ENCODE measurements at regions of chr5 and their contacts with region 1.

Region 1: GRCh38 chr5:122999945-123000563 is 36.5 kb downstream of the PPIC start:
- DNase-seq: peak; percentile 63 to 80 (median 73)
- ATAC-seq: peak; percentile 95
- H3K4me3 ChIP-seq: no peak overlapping the region
- H3K27ac ChIP-seq: no peak overlapping the region
- H3K4me1 ChIP-seq: no peaks in the 10 kb centered on the region
- H3K27me3 ChIP-seq: peaks cover 0 to 6% of the 10 kb centered on the region in 2 experiments; a peak in 1 of 5 replicates
- CTCF ChIP-seq: peak; percentile 84 to 90 (median 86)
- EP300 ChIP-seq: no peak
- POLR2A ChIP-seq: no peak
- RAD21 ChIP-seq: peak; percentile 93 to 94

Region 2: DNA sequence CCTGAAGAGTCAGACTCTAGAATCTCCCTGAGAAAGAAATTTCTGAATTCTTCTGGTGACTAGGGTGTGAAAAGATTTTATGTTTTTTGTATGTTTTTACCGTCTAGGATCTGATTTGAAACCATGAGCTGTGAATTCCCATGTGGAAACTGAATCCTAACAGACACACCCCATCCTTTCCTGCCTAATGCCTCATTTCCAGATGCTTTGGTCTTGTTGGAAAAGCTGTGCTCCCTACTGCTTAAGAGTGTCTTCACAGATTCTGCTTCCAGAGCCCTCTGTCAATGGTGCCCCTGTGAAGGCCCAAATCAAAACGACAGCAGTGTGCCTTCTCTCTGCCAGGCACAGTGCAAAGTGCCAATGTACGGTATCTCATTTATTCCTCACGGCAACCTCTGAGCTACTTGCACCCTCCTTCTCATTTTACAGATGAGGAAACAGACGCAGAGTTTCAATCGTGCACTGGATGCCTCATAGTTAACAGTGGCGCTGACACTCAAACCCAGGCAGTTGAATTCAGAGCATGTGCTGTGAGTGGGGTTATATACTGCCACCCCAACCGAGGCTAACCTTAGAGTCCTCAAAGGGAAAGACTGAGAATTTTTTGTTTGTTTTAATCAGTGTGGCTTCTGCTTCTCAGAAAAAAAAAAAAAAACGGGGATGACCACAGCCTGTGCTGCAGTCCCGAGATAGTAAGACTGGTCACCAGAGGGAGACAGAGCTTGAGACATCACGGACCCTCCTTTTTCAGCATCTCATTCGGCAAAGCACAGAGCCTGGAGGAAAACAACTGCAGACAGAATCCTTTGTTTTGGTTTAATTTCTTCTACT is 499.6 kb before region 1 on chr5:
- CTCF ChIA-PET with region 1: no interaction called
- POLR2A ChIA-PET with region 1: no interaction called
- in situ Hi-C with region 1: no loop called
- intact Hi-C with region 1: loop called (anchors 5 kb)
- DNase-seq: peak; percentile 12 to 51 (median 34)
- ATAC-seq: peak; percentile 92
- H3K4me3 ChIP-seq: no peak overlapping the region
- H3K27ac ChIP-seq: no peak overlapping the region
- H3K4me1 ChIP-seq: no peaks in the 10 kb centered on the region
- H3K27me3 ChIP-seq: no peaks in the 10 kb centered on the region; a peak in 1 of 5 replicates
- CTCF ChIP-seq: peak; percentile 54 to 71 (median 63)
- EP300 ChIP-seq: no peak
- POLR2A ChIP-seq: no peak
- RAD21 ChIP-seq: peak in 1 of 2 experiments; percentile 57; a peak in 3 of 4 replicates

Region 3: GRCh38 chr5:122515709-122516431 is 484.2 kb before region 1 on chr5:
- CTCF ChIA-PET with region 1: interaction called, 8 read pairs
- POLR2A ChIA-PET with region 1: no interaction called
- in situ Hi-C with region 1: no loop called
- intact Hi-C with region 1: loop called (anchors 1 kb)
- DNase-seq: peak; percentile 29 to 63 (median 36)
- ATAC-seq: peak; percentile 92
- H3K4me3 ChIP-seq: no peak overlapping the region
- H3K27ac ChIP-seq: no peak overlapping the region
- H3K4me1 ChIP-seq: no peaks in the 10 kb centered on the region
- H3K27me3 ChIP-seq: no peaks in the 10 kb centered on the region; a peak in 1 of 5 replicates
- CTCF ChIP-seq: peak; percentile 63 to 80 (median 67)
- EP300 ChIP-seq: no peak
- POLR2A ChIP-seq: no peak
- RAD21 ChIP-seq: peak; percentile 84 to 89

Region 4: DNA sequence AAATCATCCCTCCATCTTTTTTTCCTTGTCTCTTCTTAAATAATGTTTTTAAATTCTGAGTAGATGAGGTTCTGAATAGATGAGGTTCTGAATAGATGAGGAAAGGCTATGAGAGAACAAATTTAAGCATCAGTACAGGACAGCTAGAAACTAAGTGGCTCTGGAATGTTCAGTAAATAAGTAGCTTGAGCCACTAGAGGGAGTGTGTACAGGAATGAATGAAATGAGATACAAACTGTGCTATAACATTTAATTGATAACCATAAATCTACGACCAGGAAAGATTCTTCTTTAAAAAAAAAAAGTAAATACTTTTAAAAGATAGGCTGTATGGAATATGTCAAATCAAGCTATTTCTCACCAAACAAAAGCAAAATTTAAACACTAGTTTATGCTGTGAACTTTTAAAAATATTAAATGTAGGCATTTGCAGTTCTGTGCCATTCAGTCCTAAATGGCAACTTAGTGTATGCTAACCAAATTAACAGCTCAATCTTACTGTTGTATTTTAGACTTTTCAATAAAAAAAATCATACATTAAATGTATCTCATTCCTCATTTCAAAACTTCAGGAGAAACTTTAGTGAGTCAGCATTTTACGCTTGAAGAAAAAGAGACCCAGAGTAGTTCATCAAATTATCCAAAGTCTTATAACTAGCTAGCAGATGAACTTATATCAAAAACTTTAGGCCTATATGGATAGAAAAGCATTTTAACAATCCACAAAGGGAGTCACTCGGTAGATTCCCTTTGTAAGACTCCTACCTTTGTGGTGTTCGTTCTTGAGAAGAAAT is 295.6 kb before region 1 on chr5:
- CTCF ChIA-PET with region 1: no interaction called
- POLR2A ChIA-PET with region 1: interaction called, 3 read pairs
- in situ Hi-C with region 1: no loop called
- intact Hi-C with region 1: loop called (anchors 5 kb)
- DNase-seq: peak; percentile 13 to 46 (median 22)
- ATAC-seq: peak; percentile 87
- H3K4me3 ChIP-seq: no peak overlapping the region
- H3K27ac ChIP-seq: no peak overlapping the region
- H3K4me1 ChIP-seq: no peaks in the 10 kb centered on the region
- H3K27me3 ChIP-seq: peaks cover 0 to 3% of the 10 kb centered on the region in 2 experiments; a peak in 1 of 5 replicates
- CTCF ChIP-seq: peak; percentile 22 to 54 (median 29); a peak in 3 of 6 replicates
- EP300 ChIP-seq: no peak
- POLR2A ChIP-seq: no peak
- RAD21 ChIP-seq: peak in 1 of 2 experiments; percentile 50; a peak in 2 of 4 replicates

Region 5: GRCh38 chr5:122896598-122897282 is 103.3 kb before region 1 on chr5:
- CTCF ChIA-PET with region 1: interaction called, 15 read pairs
- POLR2A ChIA-PET with region 1: interaction called, 3 read pairs
- in situ Hi-C with region 1: no loop called
- intact Hi-C with region 1: loop called (anchors 1 kb)
- DNase-seq: peak in 1 of 4 experiments; percentile 30
- ATAC-seq: no peak
- H3K4me3 ChIP-seq: no peak overlapping the region
- H3K27ac ChIP-seq: no peak overlapping the region
- H3K4me1 ChIP-seq: no peaks in the 10 kb centered on the region
- H3K27me3 ChIP-seq: no peaks in the 10 kb centered on the region
- CTCF ChIP-seq: peak; percentile 26 to 63 (median 30); a peak in 3 of 6 replicates
- EP300 ChIP-seq: no peak
- POLR2A ChIP-seq: no peak
- RAD21 ChIP-seq: peak; percentile 79 to 81